Endothelial cell of umbilical vein (primary cell): ENCODE measurements at regions of chr1 and their contacts with region 1.

Region 1: GRCh38 chr1:34852677-34853217 is 6.8 kb downstream of the SMIM12 start:
- DNase-seq: peak; percentile 98
- H3K4me3 ChIP-seq: no peak overlapping the region
- H3K27ac ChIP-seq: no peak overlapping the region
- H3K4me1 ChIP-seq: peaks cover 13% of the 10 kb centered on the region
- H3K27me3 ChIP-seq: no peaks in the 10 kb centered on the region
- CTCF ChIP-seq: peak; percentile 95 to 99
- POLR2A ChIP-seq: peak; percentile 24

Region 2: GRCh38 chr1:34786521-34787325 is 66.0 kb before region 1 on chr1:
- CTCF ChIA-PET with region 1: interaction called, 83 read pairs
- POLR2A ChIA-PET with region 1: no interaction called
- dilution Hi-C with region 1: no loop called
- intact Hi-C with region 1: loop called (anchors 1 kb)
- DNase-seq: peak; percentile 79
- H3K4me3 ChIP-seq: no peak overlapping the region
- H3K27ac ChIP-seq: no peak overlapping the region
- H3K4me1 ChIP-seq: no peaks in the 10 kb centered on the region
- H3K27me3 ChIP-seq: peaks cover 18 to 19% of the 10 kb centered on the region in 2 experiments
- CTCF ChIP-seq: peak; percentile 74 to 89
- POLR2A ChIP-seq: no peak

Region 3: DNA sequence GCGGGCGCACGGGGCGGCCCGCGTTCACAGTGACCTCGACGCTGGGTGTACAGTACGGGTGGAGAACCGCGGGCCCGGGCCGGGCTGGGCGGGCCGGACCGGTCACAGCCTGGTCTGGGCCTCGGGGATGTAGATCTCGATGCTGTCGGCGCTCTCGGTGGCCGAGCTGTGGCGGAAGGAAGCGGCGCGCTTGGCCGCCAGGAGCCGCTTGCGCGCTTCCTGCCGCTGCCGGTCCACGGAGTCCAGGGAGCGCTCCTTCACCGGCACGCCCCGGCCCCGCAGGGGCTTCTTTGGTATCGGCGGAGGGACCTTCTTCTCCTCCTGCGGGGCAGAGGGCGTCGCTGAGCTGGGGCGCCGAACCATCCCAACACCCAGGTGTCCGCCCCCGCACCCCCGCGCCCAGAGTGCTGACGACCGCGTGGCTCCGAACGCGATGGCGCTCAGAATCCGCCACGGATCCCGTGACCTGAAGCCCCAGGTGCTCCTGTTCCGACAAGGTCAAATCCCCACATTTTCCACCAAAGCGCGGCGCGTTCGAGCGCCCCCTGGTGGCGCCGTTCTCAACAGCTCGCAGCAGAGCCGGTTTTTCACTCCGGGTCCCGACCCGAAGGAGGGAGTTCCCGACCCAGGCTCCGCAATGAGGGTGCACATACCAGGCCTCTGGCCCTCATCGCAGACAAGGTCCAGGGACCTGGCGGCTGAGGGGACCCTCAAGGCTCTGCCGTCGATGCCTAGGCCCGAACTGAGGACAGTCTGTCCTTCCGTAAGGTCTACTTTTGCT is 13.4 kb after region 1 on chr1:
- CTCF ChIA-PET with region 1: interaction called, 46 read pairs
- POLR2A ChIA-PET with region 1: no interaction called
- dilution Hi-C with region 1: no loop called
- intact Hi-C with region 1: loop called (anchors 1 kb)
- DNase-seq: peak; percentile 63
- H3K4me3 ChIP-seq: peak overlapping the region; percentile 49 to 76 (median 70)
- H3K27ac ChIP-seq: peak overlapping the region; percentile 46
- H3K4me1 ChIP-seq: peaks cover 7% of the 10 kb centered on the region
- H3K27me3 ChIP-seq: peaks cover 12 to 18% of the 10 kb centered on the region in 2 experiments
- CTCF ChIP-seq: peak; percentile 93 to 97
- POLR2A ChIP-seq: peak; percentile 32

Region 4: GRCh38 chr1:35112668-35113067 is 259.9 kb after region 1 on chr1:
- CTCF ChIA-PET with region 1: no interaction called
- POLR2A ChIA-PET with region 1: no interaction called
- dilution Hi-C with region 1: no loop called
- intact Hi-C with region 1: loop called (anchors 10 kb)
- DNase-seq: peak; percentile 9
- H3K4me3 ChIP-seq: no peak overlapping the region
- H3K27ac ChIP-seq: no peak overlapping the region
- H3K4me1 ChIP-seq: peaks cover 9% of the 10 kb centered on the region
- H3K27me3 ChIP-seq: no peaks in the 10 kb centered on the region
- CTCF ChIP-seq: no peak
- POLR2A ChIP-seq: no peak

Region 5: DNA sequence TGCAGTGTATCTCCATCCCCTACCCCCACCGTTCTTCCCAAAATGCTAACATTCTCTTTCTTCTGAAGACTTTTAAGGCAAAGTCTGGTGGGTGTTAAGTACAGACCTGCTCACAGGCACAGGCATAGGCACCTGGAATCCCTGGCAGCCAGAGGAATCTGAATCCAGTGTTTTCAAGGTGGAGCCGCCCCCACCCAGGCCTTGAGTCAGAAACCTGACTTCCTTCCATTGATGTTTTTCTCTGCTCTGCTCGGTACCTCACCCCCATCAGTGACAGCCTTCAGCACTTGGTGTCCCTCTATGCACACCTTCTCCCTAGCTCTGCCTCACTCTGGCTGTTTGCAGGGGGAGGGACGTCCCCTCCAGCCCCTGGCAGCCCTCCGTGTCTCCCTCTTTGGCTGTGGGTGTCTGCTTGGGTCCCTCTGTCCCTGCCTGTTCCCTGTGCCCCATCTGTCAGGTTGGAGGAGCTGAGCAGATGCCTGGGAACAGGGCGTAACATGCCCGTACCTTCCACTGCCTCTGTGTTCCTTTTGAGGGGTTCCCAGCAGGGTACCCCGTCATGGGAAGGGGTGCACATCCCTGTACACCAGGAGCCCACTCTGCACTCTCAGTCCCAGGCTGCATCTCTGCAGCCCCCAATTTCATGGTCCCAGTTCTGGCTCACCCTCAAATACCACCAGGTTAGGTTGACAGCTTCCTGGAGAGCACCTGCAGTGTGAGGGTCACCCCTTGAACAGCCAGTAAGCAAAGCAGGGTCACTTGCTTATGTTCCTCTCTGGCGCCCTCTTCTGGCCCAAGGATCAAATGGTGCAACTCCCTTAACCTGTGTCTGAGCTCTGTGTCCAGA is 711.5 kb after region 1 on chr1:
- CTCF ChIA-PET with region 1: interaction called, 4 read pairs
- POLR2A ChIA-PET with region 1: no interaction called
- dilution Hi-C with region 1: no loop called
- intact Hi-C with region 1: loop called (anchors 5 kb)
- DNase-seq: peak; percentile 70
- H3K4me3 ChIP-seq: no peak overlapping the region
- H3K27ac ChIP-seq: no peak overlapping the region
- H3K4me1 ChIP-seq: no peaks in the 10 kb centered on the region
- H3K27me3 ChIP-seq: no peaks in the 10 kb centered on the region
- CTCF ChIP-seq: peak; percentile 72 to 84
- POLR2A ChIP-seq: no peak